ENCODE measurements at regions of chr6 and their contacts with region 1.

Region 1: GRCh38 chr6:33014841-33015634 is 5.6 kb upstream of the HLA-DOA start:
- DNase-seq: no peak
- H3K4me3 ChIP-seq: no peak overlapping the region
- H3K27ac ChIP-seq: peak overlapping the region in 2 of 4 donors; percentile 3 to 22
- H3K4me1 ChIP-seq: peaks cover 26 to 31% (median 28%) of the 10 kb centered on the region in 4 donors
- H3K27me3 ChIP-seq: peaks cover 0 to 64% (median 4%) of the 10 kb centered on the region in 4 donors
- CTCF ChIP-seq: peak; percentile 85 to 88 (median 87)
- EP300 ChIP-seq: no peak
- POLR2A ChIP-seq: no peak

Region 2: DNA sequence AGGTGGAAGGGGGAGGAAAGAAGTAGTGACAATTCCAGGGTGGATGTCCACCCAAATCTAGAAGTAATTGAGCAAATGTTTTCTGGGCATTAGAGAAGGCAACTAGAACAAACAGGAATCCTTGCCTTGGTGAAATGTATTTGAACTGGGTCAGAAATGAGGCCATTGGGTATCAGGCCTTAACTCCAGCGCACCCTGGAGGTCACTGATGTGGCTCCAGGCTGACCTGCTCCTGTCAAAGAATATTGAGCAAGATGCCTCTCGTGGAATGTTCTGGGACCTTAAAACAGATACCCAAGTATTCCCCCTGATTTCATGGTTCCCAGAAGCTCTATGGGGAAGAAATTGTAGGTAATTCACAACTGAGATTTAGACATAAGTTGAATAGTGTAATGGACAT is 67.7 kb after region 1 on chr6:
- intact Hi-C with region 1: loop called (anchors 5 kb)
- DNase-seq: peak; percentile 50
- H3K4me3 ChIP-seq: no peak overlapping the region
- H3K27ac ChIP-seq: peak overlapping the region in 3 of 4 donors; percentile 47 to 82 (median 77)
- H3K4me1 ChIP-seq: peaks cover 15 to 34% (median 31%) of the 10 kb centered on the region in 4 donors
- H3K27me3 ChIP-seq: no peaks in the 10 kb centered on the region
- CTCF ChIP-seq: peak; percentile 61 to 83 (median 70)
- EP300 ChIP-seq: no peak
- POLR2A ChIP-seq: no peak

Region 3: GRCh38 chr6:33147807-33148666 is 133.0 kb after region 1 on chr6:
- intact Hi-C with region 1: loop called (anchors 5 kb)
- DNase-seq: no peak
- H3K4me3 ChIP-seq: no peak overlapping the region
- H3K27ac ChIP-seq: no peak overlapping the region
- H3K4me1 ChIP-seq: no peaks in the 10 kb centered on the region
- H3K27me3 ChIP-seq: peaks cover 0 to 44% (median 3%) of the 10 kb centered on the region in 4 donors
- CTCF ChIP-seq: peak; percentile 53 to 80 (median 58)
- EP300 ChIP-seq: no peak
- POLR2A ChIP-seq: no peak

Measured in esophagus muscularis mucosa (tissue), 4 donors.